A549 (cell line): ENCODE measurements at regions of chr19 and their contacts with region 1.

Region 1: DNA sequence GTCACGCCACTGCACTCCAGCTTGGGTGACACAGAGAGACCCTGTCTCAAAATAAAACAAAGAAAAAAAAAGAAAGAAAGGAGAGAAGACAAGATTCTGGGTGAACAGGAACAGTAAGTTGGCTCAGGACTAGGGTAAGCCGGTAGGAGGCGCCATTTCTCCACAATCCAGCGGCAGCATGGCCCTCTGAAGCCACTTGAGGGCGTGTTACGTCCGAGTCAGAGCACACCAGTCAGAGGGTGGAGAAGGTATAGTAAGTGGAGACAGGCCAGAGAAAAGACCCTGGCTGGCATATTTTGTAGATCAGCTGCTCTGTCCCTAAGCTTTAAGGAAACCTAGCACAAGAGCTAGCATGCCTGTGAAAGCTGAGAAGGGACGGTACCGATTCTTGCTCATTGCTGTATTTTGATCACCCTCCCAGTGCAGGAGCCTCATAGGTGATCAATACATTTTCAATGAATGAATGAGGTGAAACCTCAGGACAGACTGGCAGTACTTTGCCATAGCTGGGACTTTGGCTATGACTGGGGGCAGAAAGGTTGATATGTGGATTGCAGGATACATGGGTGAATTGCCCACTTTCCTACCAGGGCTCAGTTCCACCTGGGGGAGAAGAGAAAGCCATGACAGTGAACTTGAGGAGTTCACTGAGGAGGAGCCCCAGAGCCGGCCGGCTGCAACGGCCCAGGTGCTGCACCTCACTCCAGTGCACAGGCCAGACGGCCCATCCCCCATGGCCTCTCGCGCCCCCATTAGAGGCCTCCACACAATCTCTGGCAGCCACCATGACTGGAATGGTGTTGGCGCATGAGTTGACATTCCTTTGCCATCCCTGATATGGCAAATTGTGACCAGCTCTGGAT is 23.5 kb downstream of the POU2F2 start:
- DNase-seq: peak; percentile 95 to 98
- ATAC-seq: peak; percentile 81 to 91
- H3K4me3 ChIP-seq: no peak overlapping the region
- H3K27ac ChIP-seq: peak overlapping the region in 1 of 2 experiments; percentile 11; a peak in 1 of 6 replicates
- H3K4me1 ChIP-seq: peaks cover 18% of the 10 kb centered on the region
- CTCF ChIP-seq: peak; percentile 100
- EP300 ChIP-seq: no peak
- POLR2A ChIP-seq: no peak
- RAD21 ChIP-seq: peak; percentile 100

Region 2: GRCh38 chr19:41597600-41598041 is 511.1 kb before region 1 on chr19:
- CTCF ChIA-PET with region 1: no interaction called
- POLR2A ChIA-PET with region 1: no interaction called
- DNase-seq: peak; percentile 85 to 99
- ATAC-seq: peak; percentile 70 to 90; a peak in 5 of 6 replicates
- H3K4me3 ChIP-seq: no peak overlapping the region
- H3K27ac ChIP-seq: no peak overlapping the region
- H3K4me1 ChIP-seq: no peaks in the 10 kb centered on the region
- CTCF ChIP-seq: peak; percentile 99
- EP300 ChIP-seq: no peak
- POLR2A ChIP-seq: no peak
- RAD21 ChIP-seq: peak; percentile 44 to 54; a peak in 3 of 5 replicates

Region 3: DNA sequence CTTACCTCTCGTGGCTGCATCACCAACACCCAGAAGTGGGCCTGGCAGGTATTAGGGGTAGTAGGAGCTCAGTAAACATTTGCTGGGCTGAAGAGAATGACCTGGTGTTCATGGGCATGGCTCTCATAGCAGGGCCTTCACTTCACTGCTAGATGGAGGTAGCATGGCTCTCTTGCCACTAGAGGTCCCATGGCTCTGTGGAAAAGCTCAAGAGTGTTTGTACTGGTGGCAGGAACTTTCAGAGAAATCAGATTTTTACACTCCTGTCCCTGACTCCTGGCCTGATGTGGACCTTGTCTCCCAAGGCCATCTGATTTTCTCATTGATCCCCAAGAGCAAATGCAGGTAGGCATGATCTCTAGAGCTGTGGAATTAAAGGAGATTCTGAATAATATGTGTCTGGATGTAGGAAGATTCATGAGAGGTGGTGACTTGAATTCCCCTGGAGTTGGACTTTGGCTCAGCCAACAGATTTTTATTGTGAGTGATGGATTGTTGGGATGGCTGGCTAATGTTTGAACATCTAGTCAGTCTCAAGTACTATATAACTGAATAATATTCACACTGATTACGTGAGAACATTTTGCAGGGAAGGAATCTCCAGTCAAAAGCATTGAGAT is 27.1 kb before region 1 on chr19:
- CTCF ChIA-PET with region 1: interaction called, 47 read pairs
- POLR2A ChIA-PET with region 1: no interaction called
- DNase-seq: peak; percentile 82 to 95
- ATAC-seq: peak; percentile 88 to 92
- H3K4me3 ChIP-seq: no peak overlapping the region
- H3K27ac ChIP-seq: no peak overlapping the region
- H3K4me1 ChIP-seq: peaks cover 26% of the 10 kb centered on the region
- CTCF ChIP-seq: peak; percentile 70
- EP300 ChIP-seq: no peak
- POLR2A ChIP-seq: no peak
- RAD21 ChIP-seq: peak; percentile 52 to 61; a peak in 3 of 5 replicates

Region 4: GRCh38 chr19:42166316-42166715 is 57.6 kb after region 1 on chr19:
- CTCF ChIA-PET with region 1: interaction called, 22 read pairs
- POLR2A ChIA-PET with region 1: no interaction called
- DNase-seq: no peak
- ATAC-seq: no peak
- H3K4me3 ChIP-seq: no peak overlapping the region
- H3K27ac ChIP-seq: no peak overlapping the region
- H3K4me1 ChIP-seq: no peaks in the 10 kb centered on the region
- CTCF ChIP-seq: no peak
- EP300 ChIP-seq: no peak
- POLR2A ChIP-seq: no peak
- RAD21 ChIP-seq: no peak

Region 5: DNA sequence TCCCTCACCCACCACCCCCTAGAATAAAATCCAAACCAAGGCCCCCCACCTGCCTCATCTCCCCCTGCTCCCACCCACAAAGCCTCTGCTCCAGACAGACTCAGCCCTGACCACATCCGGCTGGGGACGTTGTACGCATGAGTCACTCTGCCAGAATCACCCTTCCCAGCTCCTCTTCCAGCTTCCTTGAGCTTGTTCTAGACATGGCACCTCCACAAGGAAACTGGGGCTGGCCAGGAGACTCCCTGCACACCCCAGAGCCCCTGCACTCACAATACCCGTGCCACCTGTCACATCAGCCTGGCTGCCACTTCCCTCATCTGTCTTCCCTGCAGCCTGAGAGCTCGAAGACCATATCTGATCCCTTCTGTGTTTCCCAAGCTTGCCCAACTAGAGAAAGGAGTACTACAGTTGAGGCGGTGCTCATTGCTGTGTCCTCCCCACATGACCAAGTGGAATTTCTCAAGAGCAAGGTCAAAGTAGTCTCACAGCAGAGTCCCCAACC is 99.1 kb after region 1 on chr19:
- CTCF ChIA-PET with region 1: interaction called, 21 read pairs
- POLR2A ChIA-PET with region 1: no interaction called
- DNase-seq: peak; percentile 70 to 86
- ATAC-seq: peak; percentile 73 to 82
- H3K4me3 ChIP-seq: no peak overlapping the region
- H3K27ac ChIP-seq: peak overlapping the region; percentile 23 to 68; a peak in 5 of 6 replicates
- H3K4me1 ChIP-seq: peaks cover 23% of the 10 kb centered on the region
- CTCF ChIP-seq: no peak
- EP300 ChIP-seq: no peak
- POLR2A ChIP-seq: no peak
- RAD21 ChIP-seq: no peak

Region 6: DNA sequence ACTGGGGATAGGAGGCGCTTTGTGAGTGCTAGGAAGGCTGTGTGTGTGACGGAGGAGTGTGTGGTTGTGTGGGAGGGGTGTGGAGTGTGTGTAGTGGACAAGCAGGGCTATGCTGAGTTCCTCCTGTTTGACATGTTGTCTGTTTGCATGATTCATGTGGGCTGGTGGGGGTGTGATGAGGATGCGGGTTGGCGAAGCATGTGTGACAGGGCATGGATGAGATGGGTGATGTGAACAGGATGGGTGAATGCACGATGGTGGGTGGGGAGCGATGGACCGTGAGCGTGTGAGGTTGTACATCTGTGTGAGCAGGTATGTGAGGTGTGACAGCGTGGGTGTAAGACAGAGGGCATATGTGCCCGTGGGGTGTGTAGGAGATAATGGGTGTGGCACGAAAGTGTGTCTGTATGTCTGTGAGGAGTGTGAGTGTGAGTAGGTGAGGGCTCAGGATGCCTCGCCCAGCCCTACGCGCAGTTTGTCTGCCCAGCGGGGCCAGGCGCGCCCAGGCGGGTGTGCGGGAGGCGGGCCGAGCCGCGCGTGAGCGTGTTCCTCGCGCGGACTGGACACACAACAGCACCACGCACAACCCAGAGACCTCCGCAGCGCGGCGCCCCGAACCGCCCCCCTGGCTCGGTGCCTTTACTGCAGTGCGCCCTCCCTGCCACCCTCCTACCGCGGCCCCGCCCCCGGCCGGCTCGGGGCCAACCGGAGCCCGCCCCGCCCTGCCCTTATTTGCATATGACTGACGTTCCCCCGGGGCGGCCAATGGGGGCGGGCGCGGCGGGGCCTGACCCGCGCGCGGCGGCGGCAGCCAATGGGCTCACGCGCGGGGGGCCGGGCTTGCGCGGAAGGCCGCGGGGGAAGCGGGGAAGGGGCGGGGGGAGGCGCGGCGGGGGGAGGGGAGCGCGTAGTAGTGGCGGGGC is 174.6 kb after region 1 on chr19:
- CTCF ChIA-PET with region 1: interaction called, 12 read pairs
- POLR2A ChIA-PET with region 1: interaction called, 3 read pairs
- DNase-seq: peak; percentile 97 to 99
- ATAC-seq: peak; percentile 31 to 56
- H3K4me3 ChIP-seq: peak overlapping the region; percentile 76
- H3K27ac ChIP-seq: peak overlapping the region; percentile 94 to 98
- H3K4me1 ChIP-seq: peaks cover 61% of the 10 kb centered on the region
- CTCF ChIP-seq: 0 out of 3 replicates have a peak, but pooled peaks have one; percentile 5
- EP300 ChIP-seq: no peak
- POLR2A ChIP-seq: peak; percentile 35; the same call in 1 of the 2 replicates
- RAD21 ChIP-seq: no peak

Region 7: DNA sequence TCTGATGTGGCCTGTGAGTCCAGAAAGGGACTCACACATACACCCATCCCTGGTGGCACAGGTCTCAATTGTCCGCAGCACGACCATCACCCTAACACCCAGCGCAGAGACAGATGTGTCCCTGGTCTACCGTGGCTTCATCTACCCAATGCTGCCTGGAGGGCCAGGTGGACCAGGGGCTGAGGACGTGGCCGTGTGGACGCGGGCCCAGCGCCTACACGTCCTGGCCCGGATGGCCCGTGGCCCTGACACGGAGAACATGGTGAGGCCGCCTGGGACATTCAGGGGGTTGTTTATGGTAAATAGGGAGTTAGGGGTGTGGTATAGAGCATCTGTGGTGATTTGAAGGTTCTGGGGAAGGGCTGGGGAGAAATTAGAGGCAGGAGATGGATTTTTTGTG is 239.5 kb after region 1 on chr19:
- CTCF ChIA-PET with region 1: no interaction called
- POLR2A ChIA-PET with region 1: no interaction called
- DNase-seq: no peak
- ATAC-seq: no peak
- H3K4me3 ChIP-seq: no peak overlapping the region
- H3K27ac ChIP-seq: no peak overlapping the region
- H3K4me1 ChIP-seq: peaks cover 6% of the 10 kb centered on the region; the same call in 2 of the 3 replicates
- CTCF ChIP-seq: no peak
- EP300 ChIP-seq: no peak
- POLR2A ChIP-seq: no peak
- RAD21 ChIP-seq: no peak

Region 8: GRCh38 chr19:42401365-42402303 is 292.9 kb after region 1 on chr19:
- CTCF ChIA-PET with region 1: interaction called, 26 read pairs
- POLR2A ChIA-PET with region 1: no interaction called
- DNase-seq: peak; percentile 89 to 96
- ATAC-seq: peak; percentile 63 to 75
- H3K4me3 ChIP-seq: peak overlapping the region; percentile 56
- H3K27ac ChIP-seq: peak overlapping the region; percentile 72 to 84
- H3K4me1 ChIP-seq: peaks cover 19% of the 10 kb centered on the region
- CTCF ChIP-seq: peak; percentile 99
- EP300 ChIP-seq: no peak
- POLR2A ChIP-seq: peak; percentile 91
- RAD21 ChIP-seq: peak in 1 of 2 experiments; percentile 67; a peak in 4 of 5 replicates